ENCODE measurements at regions of chr13 and their contacts with region 1.

Region 1: DNA sequence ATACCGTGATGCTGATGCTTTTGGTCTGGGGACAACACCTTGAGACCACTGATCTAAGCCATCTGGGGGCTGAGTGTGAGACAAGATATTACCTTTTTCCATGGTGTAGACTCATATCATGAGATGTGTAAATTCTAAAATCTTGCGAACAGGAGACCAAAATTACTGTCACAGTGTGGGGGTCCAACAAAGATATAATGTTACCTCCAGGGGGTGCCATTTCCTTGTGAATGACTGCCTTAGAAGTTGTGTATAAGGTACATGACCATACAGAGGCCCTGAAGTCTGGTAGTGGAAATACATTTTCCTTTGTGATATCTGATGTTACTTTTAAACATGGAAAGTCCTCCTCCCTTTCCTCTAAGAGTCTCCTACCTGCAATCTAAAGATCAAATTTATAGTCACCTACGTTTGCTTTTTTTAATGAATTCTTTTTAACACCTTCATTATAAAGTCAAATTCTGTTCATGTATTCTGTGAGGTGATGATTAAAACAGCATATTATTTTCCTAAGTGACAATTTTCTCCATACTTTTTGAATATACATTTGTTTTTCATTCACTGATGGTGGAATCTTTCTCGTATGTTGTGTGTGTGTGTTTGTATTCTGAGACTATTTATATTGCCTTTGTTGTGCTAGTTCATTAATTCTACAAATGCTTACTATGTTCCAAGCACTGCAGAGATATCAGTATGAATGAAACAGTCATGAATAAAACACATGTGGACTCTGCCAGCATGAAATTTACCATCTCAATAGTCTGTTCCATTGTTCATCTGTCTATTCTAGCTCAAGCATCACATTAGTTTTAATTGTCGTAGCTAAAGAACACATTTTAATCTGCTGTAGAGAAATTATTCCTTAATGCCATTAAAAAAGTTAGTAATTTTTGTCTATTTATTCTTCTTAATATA is 113.7 kb downstream of the RFC3 start:
- DNase-seq: no peak
- H3K4me3 ChIP-seq: no peak overlapping the region
- H3K27ac ChIP-seq: no peak overlapping the region
- H3K4me1 ChIP-seq: no peaks in the 10 kb centered on the region
- H3K27me3 ChIP-seq: no peaks in the 10 kb centered on the region
- CTCF ChIP-seq: peak; percentile 68

Region 2: GRCh38 chr13:33426131-33426530 is 505.5 kb before region 1 on chr13:
- CTCF ChIA-PET with region 1: no interaction called
- POLR2A ChIA-PET with region 1: no interaction called
- intact Hi-C with region 1: no loop called
- DNase-seq: no peak
- H3K4me3 ChIP-seq: no peak overlapping the region
- H3K27ac ChIP-seq: no peak overlapping the region
- H3K4me1 ChIP-seq: no peaks in the 10 kb centered on the region
- H3K27me3 ChIP-seq: no peaks in the 10 kb centered on the region
- CTCF ChIP-seq: no peak

Region 3: GRCh38 chr13:34076943-34077703 is 145.5 kb after region 1 on chr13:
- CTCF ChIA-PET with region 1: no interaction called
- POLR2A ChIA-PET with region 1: no interaction called
- intact Hi-C with region 1: loop called (anchors 5 kb)
- DNase-seq: peak in 1 of 2 experiments; percentile 38
- H3K4me3 ChIP-seq: no peak overlapping the region
- H3K27ac ChIP-seq: no peak overlapping the region
- H3K4me1 ChIP-seq: peaks cover 9% of the 10 kb centered on the region
- H3K27me3 ChIP-seq: no peaks in the 10 kb centered on the region
- CTCF ChIP-seq: peak; percentile 85